ENCODE measurements at regions of chr4 and their contacts with region 1.

Region 1: DNA sequence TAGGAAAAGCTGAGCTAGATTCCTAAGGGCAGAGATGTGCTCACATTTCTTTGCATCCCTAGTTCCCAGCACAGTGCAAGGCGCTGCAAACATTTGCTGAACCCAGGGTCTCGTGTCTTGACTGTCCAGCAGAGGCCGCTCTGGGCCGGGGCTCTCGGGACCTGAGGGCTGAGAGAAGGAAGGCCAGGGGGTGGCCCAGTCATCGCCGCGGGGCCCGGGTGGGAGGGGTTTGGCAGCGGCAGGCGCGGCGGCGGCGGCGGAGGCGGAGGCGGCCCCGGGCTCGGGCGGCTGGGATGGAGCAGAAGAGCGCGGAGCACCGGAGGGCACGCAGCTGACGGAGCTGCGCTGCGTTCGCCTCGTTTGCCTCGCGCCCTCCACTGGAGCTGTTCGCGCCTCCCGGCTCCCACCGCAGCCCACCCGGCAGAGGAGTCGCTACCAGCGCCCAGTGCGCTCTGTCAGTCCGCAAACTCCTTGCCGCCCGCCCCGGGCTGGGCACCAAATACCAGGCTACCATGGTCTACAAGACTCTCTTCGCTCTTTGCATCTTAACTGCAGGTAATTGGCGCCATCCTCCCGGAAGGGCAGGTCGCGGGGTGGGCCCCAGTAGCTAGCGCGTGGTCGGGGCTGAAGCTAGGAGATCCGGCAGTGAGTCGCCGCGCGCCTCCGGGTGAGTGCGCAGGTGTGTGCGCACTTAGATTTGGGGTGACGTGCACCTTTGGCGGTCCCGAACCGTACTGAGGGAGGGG is at the start of gene PARM1:
- DNase-seq: peak; percentile 82 to 98 (median 95)

Region 2: DNA sequence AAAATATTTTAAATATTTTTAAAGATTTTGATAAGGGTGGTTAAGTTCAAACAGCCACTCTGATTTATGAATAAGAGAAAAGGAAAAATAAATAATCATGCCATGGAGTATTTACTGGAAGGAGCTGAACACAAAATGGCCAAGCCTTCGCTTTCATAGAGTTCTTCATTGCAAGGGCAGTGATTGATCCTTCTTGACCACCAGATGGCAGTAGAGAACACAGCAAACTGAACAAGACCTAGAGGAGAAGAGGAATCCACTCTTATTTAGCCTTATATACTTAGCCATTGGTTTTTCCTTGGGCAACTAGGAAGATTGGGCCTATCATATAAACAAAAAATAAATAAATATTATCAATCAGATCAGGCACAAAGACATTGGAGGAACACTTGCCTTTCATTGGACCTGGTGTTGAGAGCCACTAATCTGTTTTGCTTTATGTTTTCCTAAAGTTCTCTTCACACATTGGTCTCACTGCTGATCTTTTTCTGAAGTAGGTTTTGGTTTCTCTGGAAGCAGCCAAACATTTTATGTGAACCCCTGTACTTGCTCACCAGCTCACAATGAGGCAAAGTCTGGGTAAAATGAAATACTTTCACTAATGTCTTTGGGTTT is 58.1 kb before region 1 on chr4:
- intact Hi-C with region 1: loop called (anchors 10 kb)
- DNase-seq: peak in 31 of 42 donors; percentile 15 to 86 (median 68)

Region 3: DNA sequence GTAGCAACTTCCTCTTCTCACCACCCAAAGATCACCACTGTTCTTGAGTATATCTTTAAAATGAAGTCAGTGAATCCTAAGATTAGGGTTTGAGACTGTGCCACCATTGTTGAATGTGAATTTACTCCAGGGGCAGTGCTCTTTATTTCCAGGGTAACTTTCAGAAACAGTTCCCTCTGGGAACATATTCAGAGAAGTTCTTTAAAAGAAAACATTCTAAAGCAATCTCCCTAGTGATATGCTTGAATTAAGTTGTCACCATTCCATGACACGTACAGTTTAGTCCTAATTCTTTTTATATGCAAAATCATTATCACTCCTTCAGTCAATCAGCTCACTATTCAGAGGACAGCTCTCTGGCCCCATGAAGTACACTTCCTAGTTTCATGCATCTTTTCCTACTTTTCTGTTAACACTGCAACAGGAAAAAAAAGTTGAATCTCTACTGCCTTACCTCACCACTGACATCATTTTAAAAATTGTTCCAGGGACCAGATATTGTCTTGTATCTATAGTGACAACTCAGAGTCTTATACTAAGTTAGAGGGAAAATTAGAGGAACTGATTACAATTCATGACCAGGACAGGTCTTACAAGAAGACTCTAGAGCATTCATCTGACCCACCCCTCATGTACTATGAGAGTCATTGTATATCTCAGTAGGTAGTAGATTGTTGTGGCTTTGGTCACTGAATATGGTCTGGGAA is 49.7 kb after region 1 on chr4:
- intact Hi-C with region 1: no loop called
- DNase-seq: no peak

Region 4: DNA sequence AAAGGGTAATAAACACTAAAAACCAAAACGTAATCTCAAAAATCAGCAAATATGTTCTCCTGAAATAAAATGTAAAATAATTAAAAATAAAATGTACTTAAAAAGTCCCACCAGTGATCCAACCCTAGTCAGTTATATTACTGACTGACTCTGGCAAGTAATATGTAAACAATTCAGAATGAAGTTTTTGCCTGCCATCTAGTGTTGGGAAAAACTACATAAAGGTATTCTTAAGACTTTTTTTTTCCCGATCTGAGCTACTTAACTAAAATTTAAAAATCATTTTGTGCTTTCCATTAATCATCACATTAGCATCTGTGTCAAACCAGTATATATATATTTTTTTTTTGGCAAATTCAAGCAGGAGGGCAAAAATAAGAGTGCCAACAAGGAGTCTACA is 557.2 kb after region 1 on chr4:
- intact Hi-C with region 1: loop called (anchors 5 kb)
- DNase-seq: no peak

Region 5: GRCh38 chr4:75881476-75881875 is 948.5 kb after region 1 on chr4:
- intact Hi-C with region 1: no loop called
- DNase-seq: no peak